Activated CD8-positive, alpha-beta T cell treated with anti-CD3 and anti-CD28 coated beads for 36 hours (primary cell): ENCODE measurements at regions of chr1 and their contacts with region 1.

Region 1: GRCh38 chr1:145845514-145846161 is at the start of gene NUDT17:
- DNase-seq: peak; percentile 85
- ATAC-seq: peak; percentile 71
- H3K4me3 Mint-ChIP-seq: no peak within 1 kb of the TSS
- H3K27ac Mint-ChIP-seq: no peak within 1 kb of the TSS
- H3K4me1 Mint-ChIP-seq: peaks cover 13% of the 10 kb centered on the region
- H3K27me3 Mint-ChIP-seq: no peaks in the 10 kb centered on the region
- CTCF ChIP-seq: peak; percentile 87
- total RNA-seq, gene NUDT17: 3.0 to 3.3 TPM

Region 2: DNA sequence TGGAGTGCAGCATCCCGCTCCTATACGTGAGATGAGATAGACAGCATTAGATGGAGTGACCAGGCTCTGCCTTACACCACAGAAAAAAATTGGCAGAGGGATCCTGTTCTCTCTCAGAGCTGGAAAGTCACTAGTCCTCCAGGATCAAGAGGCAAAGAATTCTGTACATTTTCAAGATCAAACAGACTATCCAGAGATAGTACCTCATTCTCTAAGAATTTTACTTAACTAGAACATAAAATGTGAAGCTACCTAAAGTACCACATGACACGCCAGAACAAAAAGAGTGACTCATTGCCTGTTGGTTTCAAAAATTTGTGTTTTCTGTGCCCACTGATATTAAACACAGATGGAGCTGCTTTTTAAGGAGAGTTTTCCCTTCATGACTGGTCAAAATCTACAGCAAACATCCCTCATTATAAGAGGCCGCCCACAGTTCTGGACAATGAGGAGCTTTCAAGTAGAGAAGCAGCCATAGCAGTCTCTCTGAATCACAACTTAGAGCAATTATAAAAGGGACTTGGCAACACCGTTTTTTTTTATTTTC is 94.1 kb before region 1 on chr1:
- CTCF ChIA-PET with region 1: interaction called, 12 read pairs
- POLR2A ChIA-PET with region 1: no interaction called
- intact Hi-C with region 1: no loop called
- DNase-seq: no peak
- ATAC-seq: no peak
- H3K4me3 Mint-ChIP-seq: no peak overlapping the region
- H3K27ac Mint-ChIP-seq: peak overlapping the region; percentile 30
- H3K4me1 Mint-ChIP-seq: peaks cover 12% of the 10 kb centered on the region
- H3K27me3 Mint-ChIP-seq: no peaks in the 10 kb centered on the region
- CTCF ChIP-seq: no peak

Region 3: GRCh38 chr1:145827966-145828692 is 17.5 kb before region 1 on chr1:
- CTCF ChIA-PET with region 1: interaction called, 163 read pairs
- POLR2A ChIA-PET with region 1: interaction called, 25 read pairs
- intact Hi-C with region 1: no loop called
- DNase-seq: peak; percentile 52
- ATAC-seq: peak; percentile 73
- H3K4me3 Mint-ChIP-seq: peak overlapping the region; percentile 37
- H3K27ac Mint-ChIP-seq: peak overlapping the region; percentile 94
- H3K4me1 Mint-ChIP-seq: peaks cover 45% of the 10 kb centered on the region
- H3K27me3 Mint-ChIP-seq: no peaks in the 10 kb centered on the region
- CTCF ChIP-seq: no peak

Region 4: GRCh38 chr1:145885738-145886287 is 40.2 kb after region 1 on chr1 and contains the start of gene ANKRD35:
- CTCF ChIA-PET with region 1: interaction called, 91 read pairs
- POLR2A ChIA-PET with region 1: interaction called, 4 read pairs
- intact Hi-C with region 1: no loop called
- DNase-seq: peak; percentile 95
- ATAC-seq: peak; percentile 99
- H3K4me3 Mint-ChIP-seq: peak within 1 kb of the TSS; percentile 74
- H3K27ac Mint-ChIP-seq: no peak within 1 kb of the TSS
- H3K4me1 Mint-ChIP-seq: peaks cover 17% of the 10 kb centered on the region
- H3K27me3 Mint-ChIP-seq: peaks cover 20% of the 10 kb centered on the region
- CTCF ChIP-seq: no peak
- total RNA-seq, gene ANKRD35: 0.54 to 0.59 TPM

Region 5: DNA sequence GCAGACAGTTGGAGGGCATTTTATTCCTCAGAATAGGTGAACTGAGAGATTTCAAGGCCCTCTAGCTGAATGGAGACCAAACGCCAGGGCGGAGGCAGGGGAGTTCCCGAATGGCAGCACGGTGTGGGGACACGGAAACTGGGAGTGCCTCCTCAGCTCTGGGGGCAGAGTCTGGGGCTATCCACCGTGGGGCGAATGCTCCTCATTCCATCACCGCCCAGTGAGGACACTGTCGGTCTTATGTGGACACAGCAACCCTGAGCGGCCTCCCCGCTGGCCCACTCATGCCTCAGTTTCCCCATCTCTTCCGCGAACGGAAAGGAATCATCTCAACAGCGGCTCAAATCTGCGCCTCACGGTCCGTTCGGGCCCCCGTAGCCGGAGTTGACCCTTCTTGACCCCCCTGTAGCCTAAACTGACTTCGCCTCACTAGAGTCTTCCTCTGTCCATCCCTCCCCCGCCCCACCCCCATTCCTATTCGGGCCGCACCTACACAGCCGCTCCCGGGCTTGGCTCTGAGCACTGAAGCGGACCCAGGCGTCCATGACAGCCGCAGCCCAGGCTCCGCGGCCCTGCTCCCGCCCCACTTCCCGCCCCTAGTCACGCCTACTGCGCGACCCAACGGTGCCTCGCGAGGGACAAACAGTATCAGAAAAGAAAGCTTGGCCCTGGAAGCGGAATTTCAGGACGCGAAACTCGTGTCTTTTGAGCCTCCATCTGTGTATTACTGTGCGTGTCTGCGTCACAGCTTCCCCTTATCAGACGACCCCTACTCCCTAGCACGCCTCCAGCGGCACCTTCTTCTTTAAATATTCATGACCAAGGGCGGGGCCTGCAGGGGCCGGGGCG is 72.7 kb after region 1 on chr1 and contains the start of gene PEX11B:
- CTCF ChIA-PET with region 1: interaction called, 11 read pairs
- POLR2A ChIA-PET with region 1: interaction called, 5 read pairs
- intact Hi-C with region 1: loop called (anchors 10 kb)
- DNase-seq: peak; percentile 96
- ATAC-seq: peak; percentile 92
- H3K4me3 Mint-ChIP-seq: peak within 1 kb of the TSS; percentile 96
- H3K27ac Mint-ChIP-seq: peak within 1 kb of the TSS; percentile 97
- H3K4me1 Mint-ChIP-seq: peaks cover 51% of the 10 kb centered on the region
- H3K27me3 Mint-ChIP-seq: no peaks in the 10 kb centered on the region
- CTCF ChIP-seq: no peak
- total RNA-seq, gene PEX11B: 25.8 to 26.3 TPM

Region 6: DNA sequence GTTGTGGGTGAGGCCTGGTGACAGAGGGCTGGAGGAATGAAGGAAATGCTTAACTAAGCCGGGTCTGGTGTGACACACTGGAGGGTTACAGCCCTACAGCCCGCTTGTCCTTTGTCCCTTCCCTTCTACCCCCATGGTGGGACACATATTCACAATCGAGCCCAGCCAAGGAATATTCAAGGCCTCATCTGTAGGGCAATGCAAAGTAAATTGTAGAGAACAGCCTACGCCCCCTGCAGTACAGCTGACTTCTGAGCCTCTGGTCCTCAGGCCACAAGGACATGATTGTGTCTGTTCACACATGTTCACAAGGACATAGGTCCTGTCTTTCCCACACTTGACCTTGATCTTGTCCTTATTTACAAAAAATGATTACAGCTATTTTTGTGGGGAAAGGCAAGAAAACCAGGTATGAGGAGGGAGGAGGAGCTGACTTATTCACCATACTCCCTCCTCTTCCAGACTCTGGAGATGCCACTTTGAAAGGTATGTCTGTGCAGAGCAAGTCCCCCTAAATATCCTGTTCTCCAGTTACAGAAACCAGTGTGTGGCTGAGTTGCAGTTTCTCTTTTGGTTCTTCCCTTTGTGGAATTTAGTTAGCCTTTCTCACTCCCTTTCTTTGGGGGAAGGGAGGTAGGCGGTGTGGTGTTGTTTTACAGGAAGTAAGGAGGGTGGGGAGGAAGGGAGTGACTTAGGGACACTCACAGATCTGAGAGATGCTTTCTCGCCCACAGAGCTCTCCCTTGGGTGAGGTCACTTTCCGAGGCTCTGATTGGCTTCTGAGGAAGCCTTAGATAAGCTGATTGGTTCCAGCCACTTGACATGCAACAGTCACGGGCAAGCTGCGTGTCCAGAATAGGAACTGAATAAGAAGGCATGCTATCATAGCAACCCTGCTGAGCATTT is 133.5 kb after region 1 on chr1:
- CTCF ChIA-PET with region 1: interaction called, 13 read pairs
- POLR2A ChIA-PET with region 1: no interaction called
- intact Hi-C with region 1: no loop called
- DNase-seq: peak; percentile 95
- ATAC-seq: peak; percentile 86
- H3K4me3 Mint-ChIP-seq: no peak overlapping the region
- H3K27ac Mint-ChIP-seq: no peak overlapping the region
- H3K4me1 Mint-ChIP-seq: peaks cover 41% of the 10 kb centered on the region
- H3K27me3 Mint-ChIP-seq: no peaks in the 10 kb centered on the region
- CTCF ChIP-seq: no peak